ENCODE measurements at regions of chr20 and their contacts with region 1.

Region 1: DNA sequence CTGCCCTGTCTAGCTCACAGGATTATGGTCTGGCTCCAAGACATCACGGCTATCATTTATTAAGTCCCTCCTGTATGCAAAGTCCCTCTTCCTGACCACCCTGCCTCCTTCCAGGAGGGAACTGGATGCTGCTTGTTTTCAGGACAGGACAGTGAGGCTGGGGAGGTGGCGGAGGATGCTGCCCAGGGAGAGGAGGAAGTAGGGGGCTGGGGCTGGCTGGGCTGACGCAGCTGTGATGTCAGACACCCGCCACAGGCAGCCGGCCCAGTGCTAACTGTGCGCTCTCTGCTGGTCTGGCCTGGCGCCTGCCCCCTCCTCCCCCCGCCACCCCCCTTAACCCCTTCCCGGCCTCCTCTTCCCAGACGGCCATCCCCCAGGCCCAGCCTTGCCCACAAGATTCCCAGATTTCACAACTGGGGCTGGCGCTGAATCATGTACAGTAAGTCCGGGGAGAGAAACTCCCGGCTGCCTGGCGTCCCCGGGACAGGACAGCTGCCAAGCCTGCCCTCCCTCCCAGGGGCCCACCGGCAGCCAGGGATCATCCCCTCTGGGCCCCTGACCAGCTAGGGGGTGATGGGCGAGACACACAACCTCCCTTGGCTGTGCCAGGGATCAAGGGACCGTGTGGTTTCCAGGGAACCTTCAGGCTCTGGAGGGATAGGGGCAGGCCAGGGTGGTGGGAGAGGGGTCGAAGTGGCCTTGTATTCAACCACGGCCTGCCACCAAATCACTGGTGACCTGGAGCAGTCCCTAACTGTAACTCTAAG is 118.1 kb downstream of the CEBPB start:
- DNase-seq: peak; percentile 78
- H3K4me3 ChIP-seq: no peak overlapping the region
- H3K27ac ChIP-seq: peak overlapping the region; percentile 87 to 90 (median 88)
- H3K4me1 ChIP-seq: peaks cover 28 to 65% (median 44%) of the 10 kb centered on the region in 4 donors
- H3K27me3 ChIP-seq: no peaks in the 10 kb centered on the region
- CTCF ChIP-seq: no peak
- EP300 ChIP-seq: peak; percentile 43
- POLR2A ChIP-seq: no peak

Region 2: DNA sequence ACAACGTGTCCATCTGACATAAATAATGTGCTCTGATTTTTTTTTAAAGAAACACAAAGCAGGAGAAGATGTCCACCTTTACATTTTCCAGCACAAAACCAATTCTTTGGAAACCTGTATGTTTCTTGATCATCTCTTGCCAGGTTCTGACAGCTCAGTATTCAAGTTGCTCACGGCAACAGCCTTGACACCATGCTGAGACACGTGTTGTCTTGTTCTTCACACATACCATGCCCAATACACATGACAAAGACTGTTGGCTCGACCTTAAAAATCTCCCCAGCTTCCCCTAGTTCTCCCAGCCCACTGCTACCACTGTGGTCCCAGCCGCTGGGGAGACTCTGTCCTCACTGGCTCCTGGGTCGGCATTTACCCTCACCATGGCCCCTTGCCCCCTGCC is 1999.8 kb before region 1 on chr20:
- in situ Hi-C with region 1: no loop called
- intact Hi-C with region 1: loop called (anchors 5 kb)
- DNase-seq: no peak
- H3K4me3 ChIP-seq: no peak overlapping the region
- H3K27ac ChIP-seq: no peak overlapping the region
- H3K4me1 ChIP-seq: no peaks in the 10 kb centered on the region
- H3K27me3 ChIP-seq: peaks cover 5% of the 10 kb centered on the region
- CTCF ChIP-seq: no peak
- EP300 ChIP-seq: no peak
- POLR2A ChIP-seq: no peak

Region 3: DNA sequence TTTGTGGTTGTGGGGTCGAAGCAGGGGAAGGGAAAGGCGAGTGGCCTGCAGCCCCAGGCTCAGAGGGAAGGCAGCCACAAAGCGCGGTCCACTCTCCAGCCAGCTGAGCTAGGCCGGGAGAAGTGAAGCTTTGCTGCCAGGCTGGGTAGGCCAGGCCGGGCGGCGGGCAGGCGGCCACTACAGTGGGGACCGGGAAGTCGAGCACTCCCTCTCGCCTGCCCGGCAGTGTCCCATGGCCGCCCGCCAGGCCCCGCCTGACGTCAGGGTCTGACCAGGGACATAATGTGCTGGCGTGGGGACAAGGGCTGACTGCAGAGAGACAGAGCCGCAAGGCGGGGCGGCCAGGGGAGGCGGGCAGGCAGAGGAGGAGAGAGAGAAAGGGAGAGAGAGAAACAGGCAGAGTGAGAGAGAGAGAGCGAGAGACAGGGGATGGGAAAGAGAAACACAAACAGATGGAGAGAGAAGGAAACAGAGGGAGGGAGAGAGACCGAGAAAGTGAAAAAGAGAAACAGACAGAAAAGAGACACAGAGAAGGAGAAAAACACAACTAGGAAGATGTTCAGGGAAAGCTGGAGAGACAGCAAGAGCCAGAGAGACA is 106.9 kb after region 1 on chr20:
- in situ Hi-C with region 1: no loop called
- intact Hi-C with region 1: loop called (anchors 5 kb)
- DNase-seq: peak; percentile 98
- H3K4me3 ChIP-seq: no peak overlapping the region
- H3K27ac ChIP-seq: peak overlapping the region; percentile 92 to 98 (median 96)
- H3K4me1 ChIP-seq: peaks cover 26 to 47% (median 39%) of the 10 kb centered on the region in 4 donors
- H3K27me3 ChIP-seq: no peaks in the 10 kb centered on the region
- CTCF ChIP-seq: peak in 2 of 5 experiments; percentile 1 to 7
- EP300 ChIP-seq: peak; percentile 100
- POLR2A ChIP-seq: peak; percentile 88

Measured in transverse colon (tissue), 4 donors.